Heart left ventricle (tissue), 16 donors: ENCODE measurements at regions of chr22 and their contacts with region 1.

Region 1: GRCh38 chr22:26672590-26673468 is 15.4 kb downstream of the MIAT start:
- DNase-seq: peak; percentile 92 to 95 (median 94)
- ATAC-seq: peak; percentile 92 to 96 (median 93)
- H3K4me3 ChIP-seq: peak overlapping the region; percentile 40 to 92 (median 78)
- H3K27ac ChIP-seq: peak overlapping the region; percentile 92 to 100 (median 96)
- H3K4me1 ChIP-seq: peaks cover 0 to 49% (median 24%) of the 10 kb centered on the region in 12 donors
- H3K27me3 ChIP-seq: no peaks in the 10 kb centered on the region
- CTCF ChIP-seq: peak; percentile 31 to 80 (median 56)
- POLR2A ChIP-seq: peak in 1 of 2 donors; percentile 11

Region 2: GRCh38 chr22:26364066-26365015 is 308.5 kb before region 1 on chr22:
- intact Hi-C with region 1: loop called in 1 of 10 experiments (anchors 10 kb)
- DNase-seq: peak in 4 of 5 donors; percentile 25 to 62 (median 44)
- ATAC-seq: peak; percentile 72 to 90 (median 87)
- H3K4me3 ChIP-seq: no peak overlapping the region
- H3K27ac ChIP-seq: no peak overlapping the region
- H3K4me1 ChIP-seq: peaks cover 0 to 9% (median 0%) of the 10 kb centered on the region in 12 donors
- H3K27me3 ChIP-seq: peaks cover 0 to 39% (median 0%) of the 10 kb centered on the region in 9 donors
- CTCF ChIP-seq: peak; percentile 36 to 71 (median 58)
- POLR2A ChIP-seq: no peak

Region 3: DNA sequence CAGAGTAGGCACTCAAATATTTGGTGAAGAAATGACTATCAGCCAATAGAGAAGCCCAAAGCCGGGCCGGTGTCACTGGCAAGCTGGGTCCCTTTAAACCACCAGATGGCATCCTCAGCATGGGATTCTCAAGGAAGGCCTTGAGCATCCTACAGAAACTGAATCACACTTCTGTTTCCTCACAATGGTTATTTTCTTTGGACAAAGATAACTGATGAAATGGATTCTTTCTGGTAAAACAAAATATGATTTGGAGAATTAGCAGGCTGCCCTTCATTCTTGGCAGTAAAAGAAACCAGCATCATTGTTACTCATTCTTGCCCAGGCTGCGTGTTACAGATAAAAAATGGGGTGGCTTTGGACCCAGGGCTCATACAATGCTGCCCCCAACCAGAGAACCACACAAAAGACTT is 274.1 kb before region 1 on chr22:
- intact Hi-C with region 1: loop called in 3 of 10 experiments (anchors 5 to 10 kb)
- DNase-seq: peak in 4 of 5 donors; percentile 26 to 48 (median 40)
- ATAC-seq: peak; percentile 58 to 76 (median 66)
- H3K4me3 ChIP-seq: no peak overlapping the region
- H3K27ac ChIP-seq: no peak overlapping the region
- H3K4me1 ChIP-seq: no peaks in the 10 kb centered on the region
- H3K27me3 ChIP-seq: peaks cover 0 to 10% (median 4%) of the 10 kb centered on the region in 9 donors
- CTCF ChIP-seq: peak; percentile 43 to 71 (median 58)
- POLR2A ChIP-seq: no peak

Region 4: GRCh38 chr22:27810609-27811151 is 1137.9 kb after region 1 on chr22:
- intact Hi-C with region 1: loop called in 3 of 10 experiments (anchors 5 to 10 kb)
- DNase-seq: peak in 4 of 5 donors; percentile 60 to 80 (median 67)
- ATAC-seq: peak; percentile 30 to 85 (median 76)
- H3K4me3 ChIP-seq: peak overlapping the region in 1 of 12 donors; percentile 6
- H3K27ac ChIP-seq: peak overlapping the region in 7 of 12 donors; percentile 3 to 65 (median 26)
- H3K4me1 ChIP-seq: peaks cover 0 to 17% (median 2%) of the 10 kb centered on the region in 12 donors
- H3K27me3 ChIP-seq: no peaks in the 10 kb centered on the region
- CTCF ChIP-seq: no peak
- POLR2A ChIP-seq: no peak

Region 5: DNA sequence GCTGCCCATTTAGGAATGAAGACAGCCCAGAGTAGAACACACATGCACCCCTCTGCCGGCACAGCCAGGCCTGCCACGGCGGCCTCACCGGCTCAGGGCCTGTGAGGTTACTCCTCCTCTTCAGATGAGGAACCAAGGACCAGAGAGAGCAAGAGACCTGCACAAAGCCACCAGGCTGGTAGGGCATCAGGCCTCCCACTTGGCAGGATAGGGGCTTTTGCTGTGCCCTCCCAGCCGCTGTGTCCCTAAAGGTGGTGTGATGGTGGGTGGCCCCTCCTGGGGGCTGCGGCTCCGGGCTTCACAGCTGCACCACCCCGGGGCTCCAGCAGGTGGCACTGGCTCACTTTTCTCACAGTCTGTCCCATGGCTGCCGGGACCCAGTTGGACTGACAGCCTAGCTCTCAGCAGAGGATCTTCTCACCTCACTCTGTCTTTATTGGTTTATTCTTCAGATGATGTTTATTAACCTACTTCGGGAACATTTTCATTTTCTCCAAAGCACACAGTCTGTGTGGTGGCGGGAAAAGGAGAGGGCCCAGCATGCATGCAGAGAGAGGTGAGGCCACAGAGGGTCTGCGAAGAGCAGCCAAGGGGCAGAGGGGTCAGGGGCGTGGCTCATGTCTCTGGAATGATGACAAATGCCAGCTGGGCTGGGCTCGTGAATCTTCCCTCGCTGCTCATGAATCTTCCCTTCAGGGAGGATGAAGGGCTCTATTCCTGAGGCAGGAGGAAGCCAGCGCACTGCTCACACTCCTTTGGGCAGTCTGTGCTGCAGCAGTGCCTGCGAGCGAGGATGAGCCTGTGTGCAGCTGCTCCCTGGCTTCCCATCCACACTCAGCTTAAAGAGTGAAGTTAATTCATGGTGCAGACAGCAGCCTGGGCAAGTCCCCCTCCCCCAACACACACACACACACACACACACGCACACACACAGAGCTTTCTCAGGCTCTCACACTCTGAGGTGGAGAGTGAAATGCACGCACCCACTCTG is 1347.3 kb after region 1 on chr22:
- intact Hi-C with region 1: loop called in 1 of 10 experiments (anchors 10 kb)
- DNase-seq: peak; percentile 66 to 86 (median 73)
- ATAC-seq: peak; percentile 56 to 73 (median 70)
- H3K4me3 ChIP-seq: no peak overlapping the region
- H3K27ac ChIP-seq: peak overlapping the region in 2 of 12 donors; percentile 26 to 48
- H3K4me1 ChIP-seq: peaks cover 0 to 49% (median 19%) of the 10 kb centered on the region in 12 donors
- H3K27me3 ChIP-seq: no peaks in the 10 kb centered on the region
- CTCF ChIP-seq: peak; percentile 91 to 99 (median 96)
- POLR2A ChIP-seq: no peak